ENCODE measurements at regions of chr22 and their contacts with region 1.

Region 1: GRCh38 chr22:46071451-46072109 is 78.7 kb upstream of the PPARA start:
- DNase-seq: no peak
- ATAC-seq: peak; percentile 14
- H3K4me3 Mint-ChIP-seq: peak overlapping the region; percentile 79
- H3K27ac Mint-ChIP-seq: peak overlapping the region; percentile 79
- H3K4me1 Mint-ChIP-seq: peaks cover 27% of the 10 kb centered on the region
- H3K27me3 Mint-ChIP-seq: no peaks in the 10 kb centered on the region

Region 2: GRCh38 chr22:46044621-46045438 is 26.8 kb before region 1 on chr22:
- POLR2A ChIA-PET with region 1: interaction called, 10 read pairs
- DNase-seq: peak; percentile 67
- ATAC-seq: peak; percentile 61
- H3K4me3 Mint-ChIP-seq: peak overlapping the region; percentile 86
- H3K27ac Mint-ChIP-seq: peak overlapping the region; percentile 85
- H3K4me1 Mint-ChIP-seq: peaks cover 4% of the 10 kb centered on the region
- H3K27me3 Mint-ChIP-seq: peaks cover 2% of the 10 kb centered on the region

Region 3: DNA sequence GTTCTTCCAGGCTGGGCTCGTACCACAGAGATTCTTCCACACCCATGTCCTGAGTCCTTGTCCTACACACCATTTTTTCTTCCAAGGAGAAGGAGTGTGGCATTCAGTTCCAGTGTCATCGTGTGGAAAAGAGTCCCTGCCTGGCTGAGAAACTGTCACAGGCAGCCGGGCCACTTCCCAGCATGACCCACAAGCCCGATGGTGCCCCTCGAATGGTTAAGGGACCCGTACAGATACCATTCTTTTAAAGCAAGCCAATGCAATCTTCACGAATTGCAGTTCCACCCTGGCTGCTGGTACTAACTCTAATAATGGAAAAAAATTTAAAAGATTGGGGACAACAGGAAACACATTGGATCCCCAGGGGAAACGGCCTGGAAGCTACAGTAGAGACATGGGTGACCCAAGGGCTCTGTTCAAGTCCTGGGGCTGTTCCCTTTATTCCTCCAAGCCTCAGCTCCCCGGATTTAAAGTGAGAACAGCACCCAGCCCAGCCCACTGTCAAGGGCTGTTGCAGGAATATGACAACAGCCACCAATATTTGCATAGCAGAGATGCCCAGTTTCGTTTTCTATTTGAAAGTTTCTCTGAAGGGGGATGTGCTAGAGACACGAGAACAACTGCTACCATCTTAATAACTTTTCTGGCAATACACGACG is 13.7 kb before region 1 on chr22:
- POLR2A ChIA-PET with region 1: interaction called, 58 read pairs
- DNase-seq: peak; percentile 47
- ATAC-seq: peak; percentile 82
- H3K4me3 Mint-ChIP-seq: peak overlapping the region; percentile 67
- H3K27ac Mint-ChIP-seq: peak overlapping the region; percentile 78
- H3K4me1 Mint-ChIP-seq: peaks cover 25% of the 10 kb centered on the region
- H3K27me3 Mint-ChIP-seq: no peaks in the 10 kb centered on the region

Region 4: DNA sequence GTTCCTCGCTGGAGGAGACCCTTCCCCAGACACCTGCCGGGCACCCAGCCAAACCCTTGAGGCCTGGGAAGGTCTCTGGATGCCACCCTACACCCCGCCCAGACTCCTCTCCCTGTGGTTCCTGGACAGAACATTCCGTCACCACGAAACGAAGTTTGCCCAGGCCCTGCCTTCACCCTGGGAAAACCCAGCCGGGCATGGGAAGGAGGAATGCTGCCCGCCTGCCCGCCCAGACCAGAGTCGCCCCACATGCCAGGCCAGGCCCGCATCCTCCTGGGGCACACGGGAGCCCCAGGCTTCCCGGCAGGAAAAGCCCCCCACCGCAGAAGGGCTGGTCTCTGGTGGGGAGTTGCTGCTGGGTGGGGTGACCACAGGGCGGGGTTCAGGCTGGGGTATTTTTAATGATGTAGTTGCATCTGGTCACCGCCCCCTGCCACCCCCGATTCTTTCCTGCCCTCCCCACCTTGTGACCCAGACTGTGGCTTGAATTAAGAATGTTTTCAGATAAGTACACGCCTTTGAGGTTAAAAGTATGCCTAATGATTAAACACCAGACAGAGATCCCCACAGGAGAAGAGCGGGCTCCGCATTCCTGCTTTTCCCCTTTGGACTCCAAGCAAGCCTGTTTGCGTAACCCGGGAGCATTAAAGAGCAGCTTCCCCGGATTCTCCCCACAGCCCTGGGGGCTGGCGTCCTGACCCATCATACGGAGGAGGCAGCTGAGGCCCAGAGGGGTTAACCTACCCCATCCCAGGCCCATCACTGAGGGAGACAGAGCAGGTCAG is 34.1 kb after region 1 on chr22:
- POLR2A ChIA-PET with region 1: no interaction called
- DNase-seq: no peak
- ATAC-seq: no peak
- H3K4me3 Mint-ChIP-seq: no peak overlapping the region
- H3K27ac Mint-ChIP-seq: no peak overlapping the region
- H3K4me1 Mint-ChIP-seq: no peaks in the 10 kb centered on the region
- H3K27me3 Mint-ChIP-seq: no peaks in the 10 kb centered on the region

Region 5: DNA sequence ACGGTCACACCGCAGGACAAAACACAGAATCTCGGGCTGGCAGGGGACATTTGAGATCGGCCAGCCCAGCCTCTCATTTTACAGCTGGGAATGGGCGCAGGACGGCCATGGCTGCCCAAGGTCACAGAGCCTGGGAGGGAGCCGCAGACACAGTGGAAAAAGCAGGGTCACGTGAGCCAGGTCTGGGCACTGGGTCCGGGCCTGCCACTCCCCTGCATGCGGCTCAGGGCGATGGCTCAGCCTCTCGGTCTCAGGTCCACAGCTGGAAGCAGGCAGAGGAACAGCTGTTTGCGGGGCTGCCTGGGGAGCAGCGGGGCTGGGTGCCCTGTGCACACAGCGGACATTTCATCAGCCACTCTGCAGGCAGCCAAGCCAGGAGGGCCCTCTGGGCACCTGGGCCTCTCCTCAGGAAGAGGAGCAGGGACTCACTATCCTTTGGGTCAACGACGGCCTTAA is 68.3 kb after region 1 on chr22:
- POLR2A ChIA-PET with region 1: no interaction called
- DNase-seq: no peak
- ATAC-seq: no peak
- H3K4me3 Mint-ChIP-seq: no peak overlapping the region
- H3K27ac Mint-ChIP-seq: no peak overlapping the region
- H3K4me1 Mint-ChIP-seq: no peaks in the 10 kb centered on the region
- H3K27me3 Mint-ChIP-seq: peaks cover 7% of the 10 kb centered on the region